ENCODE measurements at regions of chr4 and their contacts with region 1.

Region 1: DNA sequence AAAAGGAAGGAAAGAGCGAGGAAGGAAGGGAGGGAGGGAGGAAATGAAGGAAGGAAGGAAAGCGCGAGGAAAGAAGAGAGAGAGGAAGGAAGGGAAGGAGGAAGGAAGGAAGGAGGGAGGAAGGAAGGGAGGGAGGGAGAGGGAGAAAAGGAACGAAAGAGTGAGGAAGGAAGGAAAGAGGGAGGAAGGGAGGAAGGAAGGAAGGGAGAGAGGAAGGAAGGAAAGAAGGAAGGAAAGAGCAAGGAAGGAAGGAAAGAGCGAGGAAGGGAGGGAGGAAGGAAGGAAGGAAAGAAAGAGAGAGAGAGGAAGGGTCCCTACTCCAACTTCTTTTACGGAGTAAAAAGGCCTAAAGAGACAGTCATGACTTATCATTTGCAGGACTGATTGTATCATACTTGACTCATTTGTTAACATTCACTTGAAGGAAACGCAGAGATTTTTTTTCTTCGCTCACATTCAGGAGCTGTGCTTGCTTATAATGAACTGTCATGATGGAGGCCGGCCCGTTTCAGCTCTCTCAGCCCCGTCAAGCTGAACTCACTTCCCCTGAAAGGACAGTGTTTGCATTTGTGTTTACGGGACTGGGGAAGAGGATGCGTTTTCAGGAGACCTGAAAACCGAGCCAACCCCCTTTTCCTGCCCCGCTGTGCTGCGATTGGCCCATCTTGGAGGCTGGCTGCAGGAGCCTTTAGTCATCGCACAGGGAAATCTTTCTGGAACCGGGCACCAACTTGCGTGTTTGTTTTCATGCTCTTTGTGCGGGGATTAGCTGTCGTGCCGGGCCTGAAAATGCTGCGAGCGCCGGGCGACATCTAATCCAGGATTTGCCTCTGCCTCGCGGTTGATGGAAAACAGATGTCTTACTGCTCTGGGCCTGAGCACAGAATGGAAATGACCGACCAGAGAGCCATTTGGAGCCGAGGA is 17.8 kb downstream of the TRIM2 start:
- DNase-seq: peak in 12 of 14 experiments; percentile 4 to 58 (median 14)
- ATAC-seq: peak; percentile 69
- H3K4me3 ChIP-seq: peak overlapping the region; percentile 70
- H3K4me3 Mint-ChIP-seq: peak overlapping the region; percentile 92
- H3K27ac ChIP-seq: no peak overlapping the region
- H3K27ac Mint-ChIP-seq: peak overlapping the region; percentile 70
- H3K4me1 ChIP-seq: peaks cover 25% of the 10 kb centered on the region
- H3K4me1 Mint-ChIP-seq: peaks cover 40% of the 10 kb centered on the region
- H3K27me3 ChIP-seq: no peaks in the 10 kb centered on the region
- H3K27me3 Mint-ChIP-seq: no peaks in the 10 kb centered on the region
- CTCF ChIP-seq: no peak

Region 2: DNA sequence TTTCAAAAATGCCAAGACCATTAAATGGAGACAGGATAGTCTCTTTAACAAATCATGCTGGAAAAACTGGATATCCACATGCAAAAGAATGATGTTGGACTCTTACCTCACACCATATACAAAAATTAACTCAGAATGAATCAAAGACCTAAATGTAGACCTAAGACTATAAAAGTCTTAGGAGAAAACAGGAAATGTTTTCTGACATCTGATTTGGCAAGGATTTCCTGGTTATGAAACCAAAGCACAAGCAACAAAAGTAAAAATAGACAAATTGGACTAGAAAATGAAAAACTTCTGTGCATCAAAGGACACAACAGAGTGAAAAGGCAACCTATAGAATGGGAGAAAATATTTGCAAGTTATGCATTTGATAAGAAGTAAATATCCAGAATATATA is 404.7 kb before region 1 on chr4:
- CTCF ChIA-PET with region 1: no interaction called
- POLR2A ChIA-PET with region 1: no interaction called
- intact Hi-C with region 1: no loop called
- DNase-seq: peak in 1 of 14 experiments; percentile 9
- ATAC-seq: no peak
- H3K4me3 ChIP-seq: no peak overlapping the region
- H3K4me3 Mint-ChIP-seq: no peak overlapping the region
- H3K27ac ChIP-seq: no peak overlapping the region
- H3K27ac Mint-ChIP-seq: no peak overlapping the region
- H3K4me1 ChIP-seq: no peaks in the 10 kb centered on the region
- H3K4me1 Mint-ChIP-seq: peaks cover 24% of the 10 kb centered on the region
- H3K27me3 ChIP-seq: no peaks in the 10 kb centered on the region
- H3K27me3 Mint-ChIP-seq: no peaks in the 10 kb centered on the region
- CTCF ChIP-seq: no peak

Region 3: GRCh38 chr4:153198719-153199118 is 23.3 kb before region 1 on chr4:
- CTCF ChIA-PET with region 1: no interaction called
- POLR2A ChIA-PET with region 1: no interaction called
- intact Hi-C with region 1: no loop called
- DNase-seq: no peak
- ATAC-seq: no peak
- H3K4me3 ChIP-seq: no peak overlapping the region
- H3K4me3 Mint-ChIP-seq: no peak overlapping the region
- H3K27ac ChIP-seq: no peak overlapping the region
- H3K27ac Mint-ChIP-seq: no peak overlapping the region
- H3K4me1 ChIP-seq: peaks cover 3% of the 10 kb centered on the region
- H3K4me1 Mint-ChIP-seq: no peaks in the 10 kb centered on the region
- H3K27me3 ChIP-seq: no peaks in the 10 kb centered on the region
- H3K27me3 Mint-ChIP-seq: no peaks in the 10 kb centered on the region
- CTCF ChIP-seq: no peak

Region 4: DNA sequence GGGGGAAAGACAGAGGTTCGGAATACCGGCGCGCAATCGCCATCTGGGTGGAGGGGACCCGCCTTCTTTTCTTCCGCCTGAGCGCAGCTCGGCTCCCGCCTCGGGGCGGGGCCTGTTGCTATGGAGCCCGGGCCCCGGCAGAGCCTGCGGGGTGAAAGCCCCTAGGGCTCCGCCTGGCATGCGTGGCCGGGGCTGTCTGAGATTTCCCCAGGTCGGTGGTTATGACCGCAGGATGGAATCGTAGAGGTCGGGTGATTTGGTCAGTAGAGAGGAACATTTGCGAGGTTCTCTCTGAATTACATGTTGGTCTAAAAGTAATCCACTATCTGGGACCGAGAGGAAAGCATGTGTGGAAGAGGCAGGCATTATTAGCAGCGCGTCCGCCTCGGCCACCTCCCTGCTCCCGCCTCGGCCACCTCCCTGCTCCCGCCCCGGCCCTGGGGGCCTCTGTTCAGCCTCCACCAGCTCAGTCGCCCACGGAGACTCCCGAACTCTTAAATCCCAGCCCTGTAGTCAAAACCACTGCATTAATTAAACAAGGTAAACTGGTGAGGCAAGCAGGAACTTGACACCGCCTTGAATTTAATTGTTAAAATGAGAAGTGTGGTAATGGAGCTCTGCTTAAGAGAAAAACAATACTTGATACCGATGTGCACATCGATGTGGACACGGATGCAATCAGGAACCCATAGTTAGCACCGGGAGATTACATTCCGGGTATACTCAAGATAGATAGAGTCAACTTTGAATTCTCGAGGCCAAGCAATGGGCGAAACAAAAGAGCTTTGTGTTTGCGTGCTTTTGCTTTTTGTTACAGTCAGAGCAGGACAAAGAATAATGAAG is 27.4 kb after region 1 on chr4:
- CTCF ChIA-PET with region 1: no interaction called
- POLR2A ChIA-PET with region 1: interaction called, 26 read pairs
- intact Hi-C with region 1: no loop called
- DNase-seq: peak; percentile 67 to 96 (median 82)
- ATAC-seq: peak; percentile 97
- H3K4me3 ChIP-seq: peak overlapping the region; percentile 72
- H3K4me3 Mint-ChIP-seq: peak overlapping the region; percentile 93
- H3K27ac ChIP-seq: peak overlapping the region; percentile 81 to 85
- H3K27ac Mint-ChIP-seq: peak overlapping the region; percentile 85
- H3K4me1 ChIP-seq: peaks cover 20% of the 10 kb centered on the region
- H3K4me1 Mint-ChIP-seq: peaks cover 34% of the 10 kb centered on the region
- H3K27me3 ChIP-seq: no peaks in the 10 kb centered on the region
- H3K27me3 Mint-ChIP-seq: no peaks in the 10 kb centered on the region
- CTCF ChIP-seq: no peak